Posterior vena cava (tissue), 2 donors: ENCODE measurements at regions of chr22 and their contacts with region 1.

Region 1: GRCh38 chr22:24772493-24773181 is 1.9 kb downstream of the PIWIL3 start:
- DNase-seq: no peak

Region 2: GRCh38 chr22:24845041-24845898 is 72.6 kb after region 1 on chr22:
- intact Hi-C with region 1: loop called in 1 of 2 experiments (anchors 5 kb)
- DNase-seq: peak; percentile 88